Mammary epithelial cell (primary cell): ENCODE measurements at regions of chr2 and their contacts with region 1.

Region 1: DNA sequence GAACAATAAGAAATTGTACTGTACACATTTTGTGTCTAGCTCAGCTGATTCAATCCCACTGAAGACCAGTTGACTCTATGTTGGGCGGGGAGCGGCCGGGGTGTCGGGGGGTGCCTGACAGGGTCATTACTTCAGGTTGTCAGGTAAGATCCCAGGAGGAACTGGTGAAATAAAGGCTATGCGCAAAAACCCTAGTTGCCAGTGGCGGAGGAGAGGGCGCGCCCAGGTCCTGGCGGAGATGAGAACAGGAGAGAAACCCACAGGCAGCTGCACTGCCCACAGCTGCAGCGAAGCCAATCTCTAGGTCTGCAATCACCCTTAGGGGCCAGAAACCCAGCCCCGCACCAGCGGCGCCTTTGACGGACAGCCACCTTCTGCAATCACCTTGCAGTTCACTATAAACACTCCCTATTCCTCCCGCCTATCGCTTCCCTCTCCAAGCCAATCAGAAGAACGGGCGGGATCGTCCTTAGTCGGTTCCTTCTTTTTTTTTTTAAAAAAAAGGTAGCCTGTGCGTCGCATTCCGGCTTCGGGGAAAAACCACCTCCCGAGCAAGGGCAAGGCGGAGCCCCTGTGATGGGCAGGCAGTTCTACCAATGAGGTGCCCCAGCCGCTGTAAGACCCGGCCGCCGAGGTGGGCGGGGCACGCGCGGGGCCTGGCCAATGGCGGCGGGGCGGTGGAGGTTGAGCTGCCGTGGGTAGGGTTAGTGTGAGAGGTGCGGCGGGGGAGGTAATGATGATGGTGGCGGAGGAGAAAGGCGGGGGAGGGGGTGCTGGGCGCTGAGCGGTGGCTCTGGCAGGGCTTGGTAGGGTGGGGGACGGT is at the start of gene EHBP1:
- DNase-seq: peak; percentile 100
- H3K4me3 ChIP-seq: peak within 1 kb of the TSS; percentile 79 to 91 (median 90)
- H3K27ac ChIP-seq: peak within 1 kb of the TSS; percentile 91
- H3K4me1 ChIP-seq: peaks cover 19% of the 10 kb centered on the region
- H3K27me3 ChIP-seq: no peaks in the 10 kb centered on the region
- CTCF ChIP-seq: no peak
- total RNA-seq, gene EHBP1: 46.0 to 101 TPM

Region 2: GRCh38 chr2:61841286-61841685 is 863.9 kb before region 1 on chr2:
- CTCF ChIA-PET with region 1: no interaction called
- dilution Hi-C with region 1: no loop called
- in situ Hi-C with region 1: no loop called
- intact Hi-C with region 1: no loop called
- DNase-seq: no peak
- H3K4me3 ChIP-seq: no peak overlapping the region
- H3K27ac ChIP-seq: no peak overlapping the region
- H3K4me1 ChIP-seq: no peaks in the 10 kb centered on the region
- H3K27me3 ChIP-seq: no peaks in the 10 kb centered on the region
- CTCF ChIP-seq: no peak

Region 3: DNA sequence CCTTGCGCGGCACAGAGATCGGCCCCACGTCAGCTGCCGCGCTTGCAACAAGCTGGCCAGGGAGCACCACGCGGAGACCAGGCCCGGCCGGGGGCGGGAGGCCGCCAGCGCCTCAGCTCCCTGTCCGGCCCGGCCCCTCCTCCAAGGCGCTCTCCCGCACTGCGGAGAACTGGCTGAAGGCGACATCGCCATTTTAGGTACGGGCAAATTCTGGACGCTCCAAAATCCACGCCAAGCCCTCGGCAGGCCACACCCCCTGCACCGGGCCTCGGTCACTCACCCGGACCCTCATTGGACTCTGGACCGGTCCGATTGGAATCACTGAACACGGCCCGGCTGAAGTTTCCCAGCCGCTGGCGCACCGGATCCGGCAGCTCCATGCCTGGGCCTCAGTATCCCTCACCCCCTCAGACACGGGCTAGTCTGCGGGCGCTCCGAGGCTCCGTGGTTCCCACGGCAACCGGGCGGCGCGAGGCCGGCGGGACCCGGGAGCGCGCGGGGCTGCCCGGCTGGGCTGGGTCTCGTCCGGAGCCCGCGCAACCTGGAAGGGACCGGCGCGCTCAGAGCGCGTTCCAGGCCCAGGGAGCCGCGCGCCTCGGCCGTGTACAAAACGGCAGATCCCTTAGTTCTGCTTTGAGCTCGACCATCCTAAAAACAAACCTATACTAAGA is 199.3 kb before region 1 on chr2 and contains the start of gene TMEM17:
- CTCF ChIA-PET with region 1: no interaction called
- dilution Hi-C with region 1: no loop called
- in situ Hi-C with region 1: no loop called
- intact Hi-C with region 1: loop called (anchors 2 kb)
- DNase-seq: peak; percentile 86
- H3K4me3 ChIP-seq: peak within 1 kb of the TSS; percentile 62 to 83 (median 63)
- H3K27ac ChIP-seq: peak within 1 kb of the TSS; percentile 90
- H3K4me1 ChIP-seq: peaks cover 20% of the 10 kb centered on the region
- H3K27me3 ChIP-seq: no peaks in the 10 kb centered on the region
- CTCF ChIP-seq: no peak
- total RNA-seq, gene TMEM17: 3.0 to 3.9 TPM

Region 4: DNA sequence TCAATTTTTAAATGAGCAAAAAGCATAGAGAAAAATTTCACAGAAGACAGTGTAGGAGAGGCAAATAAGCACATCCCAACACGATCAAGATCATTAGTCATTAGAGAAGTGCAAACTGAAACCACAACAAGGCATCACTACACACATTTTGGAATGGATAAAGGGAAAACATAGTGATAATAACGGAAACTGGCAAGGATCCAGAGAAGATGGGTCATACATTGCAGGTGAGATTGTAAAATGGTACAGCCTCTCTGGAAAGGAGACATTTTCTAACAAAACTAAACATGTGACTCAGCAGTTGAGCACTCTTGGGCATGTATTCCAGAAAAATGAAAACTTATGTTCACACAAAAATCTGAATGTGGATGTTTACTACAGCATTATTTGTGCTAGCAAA is 100.9 kb before region 1 on chr2:
- CTCF ChIA-PET with region 1: no interaction called
- dilution Hi-C with region 1: no loop called
- in situ Hi-C with region 1: no loop called
- intact Hi-C with region 1: loop called (anchors 10 kb)
- DNase-seq: peak; percentile 90
- H3K4me3 ChIP-seq: no peak overlapping the region
- H3K27ac ChIP-seq: peak overlapping the region; percentile 44
- H3K4me1 ChIP-seq: peaks cover 16% of the 10 kb centered on the region
- H3K27me3 ChIP-seq: no peaks in the 10 kb centered on the region
- CTCF ChIP-seq: no peak

Region 5: GRCh38 chr2:62660582-62661262 is 44.5 kb before region 1 on chr2:
- CTCF ChIA-PET with region 1: no interaction called
- dilution Hi-C with region 1: no loop called
- in situ Hi-C with region 1: no loop called
- intact Hi-C with region 1: loop called (anchors 1 kb)
- DNase-seq: peak; percentile 86
- H3K4me3 ChIP-seq: peak overlapping the region in 1 of 3 experiments; percentile 3
- H3K27ac ChIP-seq: peak overlapping the region; percentile 83
- H3K4me1 ChIP-seq: peaks cover 49% of the 10 kb centered on the region
- H3K27me3 ChIP-seq: no peaks in the 10 kb centered on the region
- CTCF ChIP-seq: no peak

Region 6: GRCh38 chr2:62692225-62692624 is 13.0 kb before region 1 on chr2:
- CTCF ChIA-PET with region 1: no interaction called
- dilution Hi-C with region 1: no loop called
- in situ Hi-C with region 1: no loop called
- intact Hi-C with region 1: no loop called
- DNase-seq: peak; percentile 22
- H3K4me3 ChIP-seq: no peak overlapping the region
- H3K27ac ChIP-seq: no peak overlapping the region
- H3K4me1 ChIP-seq: no peaks in the 10 kb centered on the region
- H3K27me3 ChIP-seq: no peaks in the 10 kb centered on the region
- CTCF ChIP-seq: no peak

Region 7: DNA sequence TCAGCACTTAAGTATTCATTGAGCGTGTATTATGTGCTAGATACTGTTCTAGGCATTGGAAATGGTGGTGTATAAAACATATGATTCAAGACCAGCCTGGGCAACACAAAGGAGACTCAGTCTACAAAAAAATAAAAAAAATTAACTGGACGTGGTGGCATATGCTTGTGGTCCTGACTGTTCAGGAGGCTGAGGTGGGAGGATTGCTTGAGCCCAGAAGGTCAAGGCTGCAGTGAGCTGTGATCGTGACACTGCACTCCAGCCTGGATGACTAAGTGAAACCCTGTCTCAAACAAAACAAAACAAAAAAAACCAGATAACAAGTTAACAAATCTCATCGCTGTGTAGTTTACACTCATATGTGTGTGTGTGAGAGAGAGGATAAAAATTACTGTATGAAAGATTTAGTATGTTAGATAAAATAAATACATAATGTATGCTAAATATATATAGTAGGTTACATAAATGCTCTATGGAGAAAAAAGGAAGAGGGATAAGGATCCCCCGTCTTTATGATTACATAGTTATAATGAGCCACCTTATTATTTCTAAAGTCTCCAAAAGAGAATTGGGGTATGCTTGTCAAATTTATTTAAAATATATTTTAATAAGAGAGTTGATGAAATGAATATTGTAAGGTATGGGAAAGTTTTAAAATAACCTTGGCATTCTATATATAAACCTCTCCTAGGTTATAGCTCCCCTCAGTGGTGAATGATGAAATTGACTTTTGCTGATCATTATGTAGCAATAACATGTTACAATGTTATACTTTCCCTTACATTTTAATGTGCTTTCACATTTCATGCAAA is 69.5 kb after region 1 on chr2:
- CTCF ChIA-PET with region 1: no interaction called
- dilution Hi-C with region 1: no loop called
- in situ Hi-C with region 1: no loop called
- intact Hi-C with region 1: loop called (anchors 1 kb)
- DNase-seq: peak; percentile 46
- H3K4me3 ChIP-seq: no peak overlapping the region
- H3K27ac ChIP-seq: peak overlapping the region; percentile 40
- H3K4me1 ChIP-seq: no peaks in the 10 kb centered on the region
- H3K27me3 ChIP-seq: no peaks in the 10 kb centered on the region
- CTCF ChIP-seq: peak; percentile 71

Region 8: GRCh38 chr2:63064197-63064596 is 359.0 kb after region 1 on chr2:
- CTCF ChIA-PET with region 1: no interaction called
- dilution Hi-C with region 1: no loop called
- in situ Hi-C with region 1: no loop called
- intact Hi-C with region 1: no loop called
- DNase-seq: no peak
- H3K4me3 ChIP-seq: no peak overlapping the region
- H3K27ac ChIP-seq: no peak overlapping the region
- H3K4me1 ChIP-seq: no peaks in the 10 kb centered on the region
- H3K27me3 ChIP-seq: peaks cover 13% of the 10 kb centered on the region
- CTCF ChIP-seq: no peak